Psoas muscle (tissue), 8 donors: ENCODE measurements at regions of chr13 and their contacts with region 1.

Region 1: GRCh38 chr13:52665325-52665724 is 12.7 kb downstream of the SUGT1 start:
- DNase-seq: no peak
- ATAC-seq: no peak
- H3K4me3 ChIP-seq: no peak overlapping the region
- H3K27ac ChIP-seq: no peak overlapping the region
- H3K4me1 ChIP-seq: no peaks in the 10 kb centered on the region
- H3K27me3 ChIP-seq: no peaks in the 10 kb centered on the region
- CTCF ChIP-seq: peak; percentile 42

Region 2: DNA sequence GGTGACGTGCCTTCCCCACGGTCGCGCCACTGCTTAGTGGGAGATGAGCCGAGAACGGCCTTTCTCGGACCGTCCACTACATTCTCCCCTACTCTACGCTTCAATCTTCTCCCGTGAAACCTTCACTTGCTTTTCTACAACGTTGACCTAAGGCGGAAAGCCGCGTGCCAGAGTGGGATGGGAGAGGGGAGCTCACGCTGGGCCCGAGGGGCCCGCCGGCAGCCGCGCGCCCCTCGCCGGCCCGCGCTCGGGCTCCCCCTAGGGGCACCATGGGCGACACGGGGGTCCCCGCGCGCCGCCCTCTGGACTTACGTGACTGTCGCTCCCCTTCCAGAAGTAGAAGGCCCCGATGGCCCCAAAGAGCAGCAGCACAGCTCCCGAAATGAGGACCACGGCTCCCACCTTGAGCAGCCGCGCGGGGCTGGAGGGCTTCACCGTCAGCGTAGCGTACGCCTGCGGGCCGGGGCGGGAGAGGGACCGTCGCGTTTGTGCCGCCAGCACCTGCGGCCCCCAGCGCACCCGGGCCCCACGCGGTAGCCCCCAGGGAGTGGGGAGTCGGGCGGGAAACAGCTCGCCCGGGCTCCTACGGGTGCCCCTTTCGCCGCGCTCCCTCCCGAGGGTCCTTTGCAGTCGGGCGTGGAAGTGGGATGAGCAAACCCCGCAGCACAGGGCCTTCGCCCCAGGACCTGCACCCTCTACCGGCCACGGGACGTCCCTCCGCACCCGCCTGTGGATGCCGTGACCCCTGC is 73.6 kb after region 1 on chr13:
- intact Hi-C with region 1: loop called in 1 of 2 experiments (anchors 2 kb)
- DNase-seq: no peak
- ATAC-seq: peak in 3 of 4 donors; percentile 33 to 52 (median 40)
- H3K4me3 ChIP-seq: peak overlapping the region; percentile 60
- H3K27ac ChIP-seq: no peak overlapping the region
- H3K4me1 ChIP-seq: no peaks in the 10 kb centered on the region
- H3K27me3 ChIP-seq: peaks cover 0 to 37% (median 15%) of the 10 kb centered on the region in 3 donors
- CTCF ChIP-seq: peak; percentile 30

Region 3: DNA sequence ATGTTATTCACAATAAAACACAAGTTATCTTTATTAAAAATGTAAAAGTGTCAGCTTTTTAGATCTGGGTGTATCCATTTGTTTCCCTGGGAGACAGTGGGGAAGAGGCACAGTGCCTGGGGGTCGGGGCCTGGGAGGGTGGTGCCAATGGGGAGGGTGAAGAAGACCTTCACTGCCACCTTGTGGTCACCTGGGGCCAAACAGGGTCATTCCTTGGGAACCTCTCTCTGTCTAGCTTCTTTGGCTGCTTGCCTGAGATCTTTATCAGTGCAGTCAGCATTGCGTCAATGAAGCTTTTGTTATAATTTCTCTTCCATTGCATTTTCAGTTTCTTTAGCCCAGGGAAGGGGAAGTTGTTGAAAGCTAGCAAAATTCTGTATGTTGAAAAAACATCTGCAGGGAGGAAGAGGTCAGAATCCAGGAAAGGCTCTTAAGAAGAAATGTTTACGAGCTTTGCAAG is 144.0 kb after region 1 on chr13:
- intact Hi-C with region 1: loop called in 1 of 2 experiments (anchors 10 kb)
- DNase-seq: peak in 1 of 2 donors; percentile 24
- ATAC-seq: peak in 1 of 4 donors; percentile 30
- H3K4me3 ChIP-seq: no peak overlapping the region
- H3K27ac ChIP-seq: no peak overlapping the region
- H3K4me1 ChIP-seq: no peaks in the 10 kb centered on the region
- H3K27me3 ChIP-seq: no peaks in the 10 kb centered on the region
- CTCF ChIP-seq: peak; percentile 38

Region 4: GRCh38 chr13:53357582-53357981 is 692.3 kb after region 1 on chr13:
- intact Hi-C with region 1: no loop called
- DNase-seq: no peak
- ATAC-seq: no peak
- H3K4me3 ChIP-seq: no peak overlapping the region
- H3K27ac ChIP-seq: no peak overlapping the region
- H3K4me1 ChIP-seq: no peaks in the 10 kb centered on the region
- H3K27me3 ChIP-seq: no peaks in the 10 kb centered on the region
- CTCF ChIP-seq: no peak